ENCODE measurements at regions of chr20 and their contacts with region 1.

Region 1: GRCh38 chr20:8144282-8145245 is 12.5 kb downstream of the PLCB1 start:
- DNase-seq: no peak
- ATAC-seq: peak in 3 of 4 donors; percentile 18 to 70 (median 41)
- H3K4me3 ChIP-seq: no peak overlapping the region
- H3K27ac ChIP-seq: peak overlapping the region in 5 of 12 donors; percentile 3 to 40 (median 11)
- H3K4me1 ChIP-seq: peaks cover 0 to 32% (median 13%) of the 10 kb centered on the region in 12 donors
- H3K27me3 ChIP-seq: no peaks in the 10 kb centered on the region
- CTCF ChIP-seq: no peak
- POLR2A ChIP-seq: no peak

Region 2: GRCh38 chr20:8234580-8234979 is 90.0 kb after region 1 on chr20:
- intact Hi-C with region 1: loop called in 1 of 10 experiments (anchors 5 kb)
- DNase-seq: no peak
- ATAC-seq: peak in 2 of 4 donors; percentile 37 to 54
- H3K4me3 ChIP-seq: no peak overlapping the region
- H3K27ac ChIP-seq: peak overlapping the region in 3 of 12 donors; percentile 1 to 32 (median 9)
- H3K4me1 ChIP-seq: peaks cover 0 to 30% (median 14%) of the 10 kb centered on the region in 12 donors
- H3K27me3 ChIP-seq: no peaks in the 10 kb centered on the region
- CTCF ChIP-seq: no peak
- POLR2A ChIP-seq: no peak